GM18951 (cell line): ENCODE measurements at regions of chr1 and their contacts with region 1.

Region 1: DNA sequence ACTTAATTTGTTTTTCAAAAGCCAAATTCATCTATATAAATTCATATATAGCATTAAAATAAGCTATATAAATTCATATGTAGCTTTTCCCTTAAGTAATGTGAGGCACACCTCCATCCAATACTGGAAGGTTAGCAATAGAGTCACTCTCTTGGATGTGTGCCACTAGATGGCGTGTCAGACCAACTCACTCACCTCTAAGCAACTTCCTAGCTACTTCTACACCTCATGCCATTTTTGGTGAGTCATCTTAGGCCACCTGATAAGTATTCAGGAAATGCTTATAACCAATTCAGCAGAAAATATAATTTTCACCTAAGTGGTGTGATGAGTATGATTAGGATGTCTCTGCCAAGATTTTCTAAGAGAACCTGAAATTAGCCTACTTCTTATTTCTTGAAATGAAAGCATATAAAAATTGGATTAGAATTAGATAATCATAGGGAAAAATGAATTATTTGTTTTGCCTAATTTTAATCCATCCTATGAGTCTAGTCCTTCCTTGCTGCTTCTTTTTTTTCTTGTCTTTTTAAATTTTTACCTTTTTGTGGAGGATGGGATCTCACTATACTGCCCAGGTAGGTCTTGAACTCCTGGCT is 34.4 kb upstream of the TADA1 start:
- POLR2A ChIP-seq: no peak

Region 2: DNA sequence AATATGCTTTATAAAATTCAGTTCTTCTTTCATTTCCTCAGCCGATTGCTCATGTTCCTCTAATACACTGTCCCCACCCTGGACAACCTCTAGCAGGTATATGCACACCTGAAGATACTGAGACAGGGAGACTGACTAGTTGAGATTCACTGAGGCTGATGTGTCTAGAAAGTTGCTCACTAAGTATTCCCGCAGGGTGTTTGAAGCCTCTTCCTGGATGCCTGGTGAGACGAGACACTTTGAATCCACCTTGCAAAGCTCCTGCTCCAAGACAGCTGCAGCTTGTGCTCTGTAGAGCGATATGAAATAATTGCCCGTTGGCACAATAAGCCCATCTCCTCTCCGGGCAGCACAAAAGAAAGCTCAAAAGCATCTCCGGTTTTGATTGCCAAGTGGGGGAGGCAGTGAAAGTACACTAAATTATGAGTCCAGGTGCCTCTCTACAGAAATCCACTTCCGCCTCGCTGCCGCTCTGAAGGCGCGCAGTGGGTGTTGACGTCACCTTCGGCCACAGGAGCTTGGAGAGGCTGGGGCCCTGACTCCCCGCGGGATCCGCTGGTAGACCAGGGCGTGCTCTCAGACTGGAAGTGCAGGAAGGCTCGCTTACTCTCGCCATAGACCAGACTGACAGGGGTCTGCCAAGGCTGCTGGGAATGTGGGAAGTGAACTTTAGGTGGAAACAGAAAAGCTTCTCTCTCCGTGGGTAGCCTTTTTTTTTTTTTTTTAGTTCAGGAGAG is 133.4 kb after region 1 on chr1:
- in situ Hi-C with region 1: loop called (anchors 5 kb)
- POLR2A ChIP-seq: peak; percentile 12